MCF 10A (cell line): ENCODE measurements at regions of chr6 and their contacts with region 1.

Region 1: DNA sequence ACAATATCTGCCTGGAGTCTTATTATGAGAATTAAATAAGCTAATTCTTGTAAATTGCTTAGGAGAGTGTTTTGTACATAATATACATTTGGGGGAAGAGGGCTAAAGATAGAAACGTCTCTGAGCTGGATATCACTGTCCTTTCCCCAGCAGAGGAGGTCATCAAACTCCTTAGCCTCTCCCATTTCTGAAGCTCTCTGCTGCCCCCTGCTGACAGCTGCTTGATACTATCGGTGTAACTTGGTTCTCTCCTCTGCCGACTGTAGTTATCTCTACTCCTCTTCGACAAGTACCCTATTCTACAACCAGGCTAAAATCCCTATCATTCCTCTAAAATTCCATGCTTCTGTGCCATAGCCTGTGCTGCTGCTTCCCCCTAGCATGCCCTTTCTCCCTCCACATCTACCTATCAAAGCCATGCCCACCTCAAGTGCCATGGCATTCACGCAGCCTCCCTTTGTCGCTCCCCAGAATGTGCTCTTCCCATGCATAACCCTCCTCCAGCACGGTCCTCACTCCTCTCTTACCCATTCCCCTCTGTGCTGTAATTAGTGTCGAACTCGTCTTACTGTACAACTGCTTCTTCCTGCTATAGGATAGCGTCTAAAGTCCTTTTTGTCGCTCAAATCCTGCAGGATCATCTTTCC is 101.2 kb downstream of the EPM2A start:
- DNase-seq: peak; percentile 89
- H3K4me3 Mint-ChIP-seq: no peak overlapping the region
- H3K27ac Mint-ChIP-seq: no peak overlapping the region
- H3K4me1 Mint-ChIP-seq: peaks cover 6% of the 10 kb centered on the region
- H3K27me3 Mint-ChIP-seq: no peaks in the 10 kb centered on the region
- CTCF ChIP-seq: peak; percentile 85

Region 2: GRCh38 chr6:144582939-144583613 is 1051.0 kb before region 1 on chr6:
- CTCF ChIA-PET with region 1: interaction called, 30 read pairs
- POLR2A ChIA-PET with region 1: no interaction called
- intact Hi-C with region 1: loop called (anchors 1 kb)
- DNase-seq: no peak
- H3K4me3 Mint-ChIP-seq: no peak overlapping the region
- H3K27ac Mint-ChIP-seq: no peak overlapping the region
- H3K4me1 Mint-ChIP-seq: no peaks in the 10 kb centered on the region
- H3K27me3 Mint-ChIP-seq: no peaks in the 10 kb centered on the region
- CTCF ChIP-seq: no peak

Region 3: GRCh38 chr6:145028144-145028818 is 605.8 kb before region 1 on chr6:
- CTCF ChIA-PET with region 1: interaction called, 4 read pairs
- POLR2A ChIA-PET with region 1: no interaction called
- intact Hi-C with region 1: loop called (anchors 10 kb)
- DNase-seq: peak; percentile 60
- H3K4me3 Mint-ChIP-seq: no peak overlapping the region
- H3K27ac Mint-ChIP-seq: no peak overlapping the region
- H3K4me1 Mint-ChIP-seq: no peaks in the 10 kb centered on the region
- H3K27me3 Mint-ChIP-seq: no peaks in the 10 kb centered on the region
- CTCF ChIP-seq: peak; percentile 23

Region 4: DNA sequence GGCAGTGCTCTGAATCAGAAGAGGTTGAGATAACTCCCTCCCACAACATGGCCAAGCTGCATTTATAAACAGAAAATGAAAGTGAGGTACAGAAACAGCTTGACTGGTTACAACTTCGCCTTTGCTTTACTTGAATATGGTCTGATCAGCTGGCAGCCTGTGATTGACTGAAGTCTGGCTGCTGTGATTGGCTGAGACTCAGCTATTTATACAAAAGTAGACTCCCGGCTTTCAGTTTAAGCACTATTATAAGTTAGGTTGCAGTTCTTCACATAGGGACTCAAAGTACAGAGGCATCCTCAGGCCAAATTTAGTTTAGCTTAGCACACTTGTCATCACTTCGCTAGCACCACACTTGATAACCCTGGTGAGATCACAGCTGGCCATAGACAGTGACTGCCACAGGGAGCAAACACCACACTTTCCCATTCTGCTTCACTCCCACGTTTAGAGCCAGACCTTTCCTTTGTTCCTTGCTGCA is 261.4 kb before region 1 on chr6:
- CTCF ChIA-PET with region 1: interaction called, 10 read pairs
- POLR2A ChIA-PET with region 1: no interaction called
- intact Hi-C with region 1: no loop called
- DNase-seq: peak; percentile 6
- H3K4me3 Mint-ChIP-seq: no peak overlapping the region
- H3K27ac Mint-ChIP-seq: no peak overlapping the region
- H3K4me1 Mint-ChIP-seq: no peaks in the 10 kb centered on the region
- H3K27me3 Mint-ChIP-seq: no peaks in the 10 kb centered on the region
- CTCF ChIP-seq: no peak

Region 5: DNA sequence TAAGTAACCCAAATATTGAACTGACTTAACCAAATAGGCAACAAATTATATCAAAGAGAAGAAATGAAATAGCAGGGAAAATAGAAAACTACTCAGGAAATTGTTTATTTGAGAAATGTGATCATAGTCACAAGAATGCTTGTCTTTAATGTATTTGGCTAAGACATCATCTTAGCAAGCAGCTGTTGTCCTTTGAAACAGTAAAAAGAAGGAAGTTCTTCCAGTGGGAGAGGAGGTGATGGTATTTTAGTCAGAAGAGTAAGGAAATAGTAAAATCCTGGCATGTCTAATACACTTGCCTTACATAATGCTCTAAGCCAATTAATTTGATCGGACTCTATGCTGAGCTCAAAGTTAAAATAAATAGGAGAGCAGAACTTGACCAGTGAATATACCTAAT is 25.3 kb before region 1 on chr6:
- CTCF ChIA-PET with region 1: interaction called, 11 read pairs
- POLR2A ChIA-PET with region 1: interaction called, 3 read pairs
- intact Hi-C with region 1: no loop called
- DNase-seq: no peak
- H3K4me3 Mint-ChIP-seq: no peak overlapping the region
- H3K27ac Mint-ChIP-seq: no peak overlapping the region
- H3K4me1 Mint-ChIP-seq: no peaks in the 10 kb centered on the region
- H3K27me3 Mint-ChIP-seq: no peaks in the 10 kb centered on the region
- CTCF ChIP-seq: no peak

Region 6: DNA sequence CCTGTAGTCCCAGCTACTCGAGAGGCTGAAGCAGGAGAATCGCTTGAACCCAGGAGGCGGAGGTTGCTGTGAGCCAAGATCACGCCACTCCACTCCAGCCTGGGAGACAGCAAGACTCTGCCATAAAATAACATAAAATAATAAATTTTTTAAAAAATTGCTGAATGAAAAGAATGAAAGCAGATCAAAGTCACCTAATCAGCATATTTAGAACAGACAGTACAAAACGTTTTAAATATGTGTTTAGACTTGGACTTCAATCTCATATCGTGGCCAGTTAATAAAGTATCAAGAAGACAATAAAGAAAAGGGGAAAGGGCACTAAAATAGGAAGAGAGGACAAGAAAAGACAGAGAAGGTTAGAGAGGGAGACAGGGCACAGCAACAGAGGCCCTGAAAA is 26.6 kb after region 1 on chr6:
- CTCF ChIA-PET with region 1: interaction called, 10 read pairs
- POLR2A ChIA-PET with region 1: interaction called, 3 read pairs
- intact Hi-C with region 1: no loop called
- DNase-seq: no peak
- H3K4me3 Mint-ChIP-seq: no peak overlapping the region
- H3K27ac Mint-ChIP-seq: no peak overlapping the region
- H3K4me1 Mint-ChIP-seq: no peaks in the 10 kb centered on the region
- H3K27me3 Mint-ChIP-seq: no peaks in the 10 kb centered on the region
- CTCF ChIP-seq: no peak